CD4-positive, alpha-beta memory T cell (primary cell): ENCODE measurements at regions of chr3 and their contacts with region 1.

Region 1: DNA sequence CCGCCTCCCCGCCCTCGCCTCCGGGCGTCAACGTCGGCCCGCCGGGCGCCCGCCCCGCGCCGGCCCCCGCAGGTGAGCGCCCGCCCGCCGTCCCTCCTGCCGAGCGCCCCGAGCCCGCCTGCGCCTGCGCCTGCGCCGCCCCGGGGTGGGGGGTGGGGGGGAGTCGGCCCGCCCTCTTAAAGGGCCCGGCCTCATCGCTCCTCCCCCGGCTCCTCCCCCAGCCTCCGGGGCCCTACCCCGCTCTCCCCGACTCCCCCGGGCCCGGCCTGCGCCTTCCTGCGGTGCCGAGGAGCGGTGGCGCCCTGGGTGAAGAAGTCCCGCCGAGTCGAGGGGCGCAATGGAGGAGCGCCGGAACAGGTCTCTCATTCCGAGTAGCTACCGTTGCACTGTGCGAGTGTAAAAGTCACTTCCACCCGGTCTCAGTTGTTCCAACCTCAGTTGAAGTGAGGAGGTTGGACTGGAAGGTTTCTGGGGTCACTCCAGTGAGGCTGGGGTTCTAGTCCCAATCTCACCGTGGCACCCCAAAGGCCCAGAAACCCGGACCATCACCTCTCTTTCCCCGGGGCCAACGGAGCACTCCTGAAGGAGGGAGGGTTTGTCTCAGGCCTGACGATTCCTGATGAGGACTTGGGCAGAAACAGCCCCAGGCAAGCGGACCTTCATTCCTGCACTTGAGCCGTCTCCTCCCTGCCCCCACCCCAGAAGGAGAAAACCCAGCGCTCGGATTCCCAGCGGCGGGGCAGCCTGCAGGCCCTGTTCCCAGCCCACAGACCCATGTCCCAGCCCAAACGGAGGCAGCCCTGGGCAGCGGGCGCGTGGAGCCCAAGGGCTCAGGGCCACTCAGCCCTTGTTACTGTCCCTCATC is 1.5 kb upstream of the TNK2 start:
- DNase-seq: peak; percentile 86 to 88 (median 87)
- H3K4me3 ChIP-seq: peak overlapping the region; percentile 42 to 47
- H3K4me3 Mint-ChIP-seq: peak overlapping the region; percentile 57 to 79 (median 65)
- H3K27ac ChIP-seq: peak overlapping the region; percentile 58
- H3K27ac Mint-ChIP-seq: peak overlapping the region in 6 of 7 donors; percentile 46 to 88 (median 76)
- H3K4me1 ChIP-seq: peaks cover 43% of the 10 kb centered on the region
- H3K4me1 Mint-ChIP-seq: peaks cover 22 to 46% (median 33%) of the 10 kb centered on the region in 4 donors
- H3K27me3 ChIP-seq: no peaks in the 10 kb centered on the region
- H3K27me3 Mint-ChIP-seq: no peaks in the 10 kb centered on the region

Region 2: GRCh38 chr3:195894780-195895607 is 14.9 kb before region 1 on chr3:
- CTCF ChIA-PET with region 1: interaction called, 479 read pairs
- POLR2A ChIA-PET with region 1: interaction called, 245 read pairs
- intact Hi-C with region 1: loop called (anchors 1 kb)
- DNase-seq: peak; percentile 68 to 81 (median 75)
- H3K4me3 ChIP-seq: peak overlapping the region; percentile 25 to 77
- H3K4me3 Mint-ChIP-seq: peak overlapping the region; percentile 88 to 98 (median 92)
- H3K27ac ChIP-seq: peak overlapping the region; percentile 86
- H3K27ac Mint-ChIP-seq: peak overlapping the region; percentile 92 to 96 (median 94)
- H3K4me1 ChIP-seq: peaks cover 47% of the 10 kb centered on the region
- H3K4me1 Mint-ChIP-seq: peaks cover 28 to 53% (median 39%) of the 10 kb centered on the region in 4 donors
- H3K27me3 ChIP-seq: no peaks in the 10 kb centered on the region
- H3K27me3 Mint-ChIP-seq: no peaks in the 10 kb centered on the region

Region 3: DNA sequence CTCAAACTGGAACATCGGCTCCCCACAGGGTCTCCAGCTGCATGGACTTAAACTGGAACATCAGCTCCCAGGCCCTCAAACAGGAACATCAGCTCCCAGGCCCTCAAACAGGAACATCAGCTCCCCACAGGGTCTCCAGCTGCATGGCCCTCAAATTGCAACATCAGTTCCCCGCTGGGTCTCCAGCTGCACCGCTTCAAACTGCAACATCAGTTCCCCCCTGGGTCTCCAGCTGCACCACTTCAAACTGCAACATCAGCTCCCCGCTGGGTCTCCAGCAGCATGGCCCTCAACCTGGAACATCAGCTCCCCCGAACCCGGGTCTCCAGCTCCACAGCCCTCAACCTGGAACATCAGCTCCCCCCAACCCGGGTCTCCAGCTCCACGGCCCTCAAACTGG is 90.0 kb after region 1 on chr3:
- CTCF ChIA-PET with region 1: no interaction called
- POLR2A ChIA-PET with region 1: no interaction called
- intact Hi-C with region 1: no loop called
- DNase-seq: no peak
- H3K4me3 ChIP-seq: no peak overlapping the region
- H3K4me3 Mint-ChIP-seq: no peak overlapping the region
- H3K27ac ChIP-seq: no peak overlapping the region
- H3K27ac Mint-ChIP-seq: no peak overlapping the region
- H3K4me1 ChIP-seq: no peaks in the 10 kb centered on the region
- H3K4me1 Mint-ChIP-seq: no peaks in the 10 kb centered on the region
- H3K27me3 ChIP-seq: no peaks in the 10 kb centered on the region
- H3K27me3 Mint-ChIP-seq: peaks cover 12 to 14% of the 10 kb centered on the region in 2 donors